Posterior cingulate gyrus (tissue), 11 donors: ENCODE measurements at regions of chr1 and their contacts with region 1.

Region 1: GRCh38 chr1:45686317-45687013 is at the start of gene GPBP1L1:
- DNase-seq: peak; percentile 96 to 100 (median 98)

Region 2: DNA sequence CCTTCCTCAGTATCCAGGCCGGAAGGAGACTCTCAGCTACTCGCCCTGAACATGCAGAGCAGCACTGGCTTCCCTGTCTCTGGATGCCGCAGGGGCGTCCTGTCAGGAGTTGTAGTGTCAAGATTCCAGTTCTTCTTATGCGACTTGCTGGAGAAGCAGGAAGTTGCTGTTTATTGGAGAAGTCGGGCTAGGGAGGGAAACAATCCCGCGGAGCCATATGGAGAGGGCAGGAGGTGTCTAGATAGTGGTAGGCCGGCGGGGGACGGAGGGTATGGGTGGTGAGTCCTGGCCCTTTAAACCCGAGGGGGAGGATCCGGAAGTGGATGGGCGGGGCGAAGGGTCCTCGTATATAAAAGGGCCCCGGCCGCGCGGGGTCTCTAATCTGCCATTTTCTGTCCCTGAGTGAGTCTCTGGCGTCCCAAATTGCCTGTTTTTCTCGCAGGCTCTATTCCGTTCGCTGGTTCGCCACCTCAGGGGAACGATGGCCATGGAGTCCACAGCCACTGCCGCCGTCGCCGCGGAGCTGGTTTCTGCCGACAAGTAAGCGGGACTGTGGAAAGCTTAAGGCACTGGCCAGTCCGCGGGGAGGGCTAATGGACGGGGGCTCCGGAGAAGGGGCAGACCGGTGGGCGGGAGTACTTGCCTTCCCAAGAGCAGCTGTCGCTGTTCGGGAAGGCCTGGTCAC is 102.7 kb before region 1 on chr1 and contains the start of gene NASP:
- intact Hi-C with region 1: loop called (anchors 1 kb)
- DNase-seq: peak; percentile 83 to 98 (median 91)

Region 3: DNA sequence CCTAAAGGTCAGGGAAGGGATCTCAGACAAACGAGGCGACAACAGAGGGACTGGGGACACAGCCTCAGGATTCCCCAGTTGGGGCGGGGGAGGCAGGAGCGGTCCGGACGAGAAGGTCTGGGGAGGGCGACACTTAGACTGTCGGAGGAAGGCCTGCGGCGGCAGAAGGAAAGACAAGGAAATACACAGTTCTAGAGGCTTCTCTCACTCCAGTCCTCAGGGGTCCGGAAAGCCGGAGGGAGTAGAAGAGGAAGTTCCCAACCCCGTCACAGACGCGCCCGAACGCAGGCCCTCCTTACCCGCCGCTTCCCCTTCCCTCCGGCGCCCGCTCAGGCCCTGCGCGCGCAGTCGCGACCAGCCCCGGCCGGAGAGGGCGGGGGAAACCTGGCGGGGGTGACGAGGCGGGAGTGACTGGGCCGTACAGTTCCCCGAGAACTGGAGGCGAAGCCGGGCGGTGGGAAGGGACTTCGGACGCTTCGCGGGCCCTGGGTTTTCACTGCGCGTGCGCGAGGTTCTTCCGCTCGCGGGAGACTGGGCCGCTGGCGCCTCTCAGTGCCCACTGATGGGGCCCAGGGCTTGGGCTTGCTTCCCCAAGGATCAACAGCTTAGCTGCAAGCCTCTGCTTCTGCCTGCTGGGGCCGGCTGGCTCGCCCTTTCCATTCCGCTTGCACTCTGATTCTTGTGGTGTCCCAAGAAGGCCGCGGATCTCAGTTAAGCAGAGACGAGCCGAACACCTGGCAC is 64.0 kb after region 1 on chr1 and contains the start of gene IPP:
- intact Hi-C with region 1: loop called (anchors 2 kb)
- DNase-seq: peak; percentile 88 to 99 (median 92)

Region 4: GRCh38 chr1:45803301-45803780 is 116.9 kb after region 1 on chr1 and contains the start of gene MAST2:
- intact Hi-C with region 1: loop called (anchors 5 kb)
- DNase-seq: peak; percentile 71 to 98 (median 85)